ENCODE measurements at regions of chr2 and their contacts with region 1.

Region 1: GRCh38 chr2:43877782-43878464 is 39.2 kb downstream of the ABCG8 start:
- DNase-seq: peak; percentile 73 to 85
- ATAC-seq: peak; percentile 72 to 85
- H3K4me3 ChIP-seq: no peak overlapping the region
- H3K27ac ChIP-seq: no peak overlapping the region
- H3K4me1 ChIP-seq: peaks cover 16% of the 10 kb centered on the region
- CTCF ChIP-seq: peak; percentile 93
- EP300 ChIP-seq: no peak
- POLR2A ChIP-seq: no peak
- RAD21 ChIP-seq: peak; percentile 91 to 96

Region 2: DNA sequence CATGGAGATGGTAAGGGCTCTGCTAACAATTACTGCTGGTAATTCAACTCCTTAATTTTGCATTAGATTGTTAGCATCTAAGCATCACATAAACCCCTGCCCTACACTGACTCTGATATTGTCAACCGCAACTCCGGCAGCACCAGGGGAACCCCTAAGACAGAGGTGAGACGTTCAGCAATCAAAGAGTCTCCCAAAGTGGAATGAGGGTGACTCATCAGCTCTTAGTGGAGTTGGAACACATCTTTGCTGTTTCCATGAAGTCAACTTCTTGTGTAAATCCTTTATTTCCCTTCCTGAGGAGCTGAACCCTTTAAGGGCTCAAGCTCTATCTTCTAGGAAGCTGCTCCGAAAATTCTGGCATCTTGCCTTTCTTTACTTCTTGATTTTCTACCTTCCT is 12.9 kb after region 1 on chr2:
- CTCF ChIA-PET with region 1: interaction called, 21 read pairs
- POLR2A ChIA-PET with region 1: no interaction called
- DNase-seq: no peak
- ATAC-seq: 0 out of 6 replicates have a peak, but pooled peaks of 1 of the 2 experiments have one; percentile 54
- H3K4me3 ChIP-seq: no peak overlapping the region
- H3K27ac ChIP-seq: no peak overlapping the region
- H3K4me1 ChIP-seq: no peaks in the 10 kb centered on the region; the same call in 2 of the 3 replicates
- CTCF ChIP-seq: no peak
- EP300 ChIP-seq: no peak
- POLR2A ChIP-seq: no peak
- RAD21 ChIP-seq: no peak

Region 3: DNA sequence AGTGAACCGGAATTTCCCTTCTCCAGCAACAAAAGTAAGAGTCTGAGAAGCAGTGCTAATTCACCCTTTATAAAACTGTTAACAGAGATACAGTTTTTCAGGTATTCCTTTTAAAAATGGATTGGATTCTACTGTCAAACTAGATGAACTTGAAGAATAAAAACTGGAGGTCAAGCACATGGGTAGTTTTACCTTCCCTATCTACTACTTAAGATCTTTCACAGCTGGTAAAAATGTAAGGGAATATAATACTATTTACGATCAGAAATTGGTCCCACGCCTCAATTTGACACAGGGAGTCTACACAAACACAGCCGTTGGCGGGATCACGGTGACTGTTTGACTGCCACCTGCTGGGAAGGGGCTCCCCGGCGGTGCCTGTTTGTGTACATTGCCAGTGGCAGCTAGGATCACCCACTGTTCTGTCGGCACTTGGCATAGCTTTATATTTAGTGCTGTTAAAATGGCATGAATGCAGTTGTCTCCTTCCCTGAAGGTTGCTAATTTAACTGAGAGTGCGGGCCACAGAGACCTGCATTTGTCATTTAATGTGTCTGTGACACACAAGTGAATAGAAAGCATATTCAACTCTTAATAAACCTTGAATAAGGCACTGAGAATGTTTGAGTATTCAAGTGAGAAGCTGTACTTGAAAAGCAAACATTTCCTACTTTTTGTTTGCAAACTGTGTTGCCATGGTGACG is 20.4 kb after region 1 on chr2:
- CTCF ChIA-PET with region 1: interaction called, 21 read pairs
- POLR2A ChIA-PET with region 1: no interaction called
- DNase-seq: peak; percentile 64 to 76
- ATAC-seq: peak; percentile 90 to 94
- H3K4me3 ChIP-seq: no peak overlapping the region
- H3K27ac ChIP-seq: 0 out of 6 replicates have a peak overlapping the region, but pooled peaks of 1 of the 2 experiments have one; percentile 1
- H3K4me1 ChIP-seq: peaks cover 28% of the 10 kb centered on the region
- CTCF ChIP-seq: peak; percentile 61
- EP300 ChIP-seq: no peak
- POLR2A ChIP-seq: no peak
- RAD21 ChIP-seq: peak in 1 of 2 experiments; percentile 47; a peak in 3 of 5 replicates

Region 4: GRCh38 chr2:43905371-43905803 is 27.5 kb after region 1 on chr2:
- CTCF ChIA-PET with region 1: interaction called, 15 read pairs
- POLR2A ChIA-PET with region 1: no interaction called
- DNase-seq: no peak
- ATAC-seq: no peak
- H3K4me3 ChIP-seq: no peak overlapping the region
- H3K27ac ChIP-seq: no peak overlapping the region
- H3K4me1 ChIP-seq: peaks cover 13% of the 10 kb centered on the region; the same call in 2 of the 3 replicates
- CTCF ChIP-seq: no peak
- EP300 ChIP-seq: no peak
- POLR2A ChIP-seq: no peak
- RAD21 ChIP-seq: no peak

Region 5: GRCh38 chr2:43958397-43959275 is 80.7 kb after region 1 on chr2:
- CTCF ChIA-PET with region 1: no interaction called
- POLR2A ChIA-PET with region 1: no interaction called
- DNase-seq: no peak
- ATAC-seq: no peak
- H3K4me3 ChIP-seq: no peak overlapping the region
- H3K27ac ChIP-seq: no peak overlapping the region
- H3K4me1 ChIP-seq: no peaks in the 10 kb centered on the region
- CTCF ChIP-seq: no peak
- EP300 ChIP-seq: no peak
- POLR2A ChIP-seq: no peak
- RAD21 ChIP-seq: no peak